Thyroid gland (tissue), 4 donors: ENCODE measurements at regions of chr2 and their contacts with region 1.

Region 1: DNA sequence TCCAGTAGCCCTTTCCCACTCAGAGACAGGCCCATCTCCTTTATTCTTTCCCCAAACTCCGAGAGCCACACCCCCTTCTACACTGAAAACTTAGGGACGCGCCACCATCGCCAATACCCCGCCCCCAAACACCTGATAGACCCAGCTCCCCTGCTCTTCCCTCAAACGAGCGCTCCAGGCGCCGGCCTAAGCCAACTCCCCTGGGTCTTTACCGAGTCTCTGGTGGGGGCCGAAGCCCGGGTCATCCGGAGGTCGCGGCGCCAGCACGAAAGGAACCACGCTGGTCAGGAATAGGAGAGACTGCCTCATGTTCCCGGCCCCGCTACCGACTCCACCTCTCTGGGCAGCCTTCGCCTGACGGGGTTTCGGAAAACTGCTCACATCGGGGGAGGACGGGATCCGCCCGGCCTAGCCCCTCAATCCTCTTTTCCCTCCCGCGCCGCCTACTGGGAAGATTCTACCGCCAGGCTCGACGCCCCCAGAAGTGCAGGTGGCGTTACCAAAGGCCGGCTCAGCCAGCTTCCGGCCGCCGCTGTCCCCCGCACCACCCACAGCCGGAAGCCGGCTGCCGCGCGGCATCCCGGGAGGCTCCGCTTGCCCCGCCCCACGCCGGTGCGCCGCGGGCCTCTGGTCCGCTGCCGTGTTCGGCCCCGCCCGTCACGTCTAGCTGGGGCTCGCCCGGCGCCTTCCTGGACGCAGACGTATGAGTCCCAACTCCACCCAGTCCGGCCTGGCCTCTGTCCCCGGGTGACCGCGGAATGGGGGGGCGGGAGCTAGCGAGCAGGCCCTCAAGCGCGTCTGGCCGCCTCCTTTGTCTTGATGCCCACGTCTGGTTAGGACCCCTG is at the start of gene ADAM17:
- DNase-seq: peak; percentile 97
- H3K4me3 ChIP-seq: peak within 1 kb of the TSS; percentile 56 to 92 (median 84)
- H3K27ac ChIP-seq: peak within 1 kb of the TSS; percentile 97 to 100 (median 99)
- H3K4me1 ChIP-seq: peaks cover 21 to 41% of the 10 kb centered on the region in 2 donors
- H3K27me3 ChIP-seq: no peaks in the 10 kb centered on the region
- CTCF ChIP-seq: peak in 4 of 6 experiments; percentile 23 to 82 (median 58)
- POLR2A ChIP-seq: peak; percentile 86 to 97
- total RNA-seq, gene ADAM17: 26.9 to 39.4 (median 31.3) TPM

Region 2: GRCh38 chr2:9261231-9261883 is 294.2 kb before region 1 on chr2:
- intact Hi-C with region 1: no loop called
- DNase-seq: no peak
- H3K4me3 ChIP-seq: no peak overlapping the region
- H3K27ac ChIP-seq: peak overlapping the region; percentile 36 to 81 (median 66)
- H3K4me1 ChIP-seq: peaks cover 72 to 83% of the 10 kb centered on the region in 2 donors
- H3K27me3 ChIP-seq: no peaks in the 10 kb centered on the region
- CTCF ChIP-seq: no peak
- POLR2A ChIP-seq: no peak

Region 3: DNA sequence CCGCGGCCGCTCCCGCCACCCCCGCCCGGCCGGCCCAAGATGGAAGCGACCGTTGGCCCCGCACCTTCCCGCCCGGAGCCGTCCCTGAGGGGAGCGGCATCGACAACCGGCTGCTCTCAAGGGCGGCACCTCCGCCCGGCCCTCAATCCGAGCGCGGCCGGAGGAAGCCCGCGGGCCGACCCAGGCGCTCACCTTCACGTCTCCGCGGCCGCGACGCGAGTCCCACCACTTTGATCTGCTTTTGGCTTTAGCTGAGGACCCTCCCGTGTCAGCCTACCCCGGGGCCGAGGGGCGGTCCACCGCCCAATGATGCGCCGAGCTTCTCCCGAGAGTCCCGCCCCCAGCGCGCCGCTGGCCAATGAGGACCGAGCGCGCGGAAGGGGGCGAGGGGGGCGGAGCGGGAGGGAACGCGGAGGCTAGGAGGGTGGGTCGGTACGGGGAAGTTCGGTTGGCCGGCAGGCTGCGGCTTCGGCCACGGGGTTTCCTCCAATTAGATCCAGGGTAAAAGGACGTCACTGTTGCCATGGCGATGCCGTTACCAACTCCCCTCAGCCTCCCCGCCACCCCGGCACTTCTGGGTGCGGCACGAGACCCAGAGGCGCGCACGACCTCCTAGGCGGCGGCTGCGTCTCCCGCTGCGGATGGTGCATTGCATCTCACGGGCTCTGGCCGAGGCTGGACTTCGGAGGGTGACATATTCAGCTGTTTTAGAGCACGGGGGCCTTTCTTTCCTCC is 75.4 kb after region 1 on chr2 and contains the start of gene YWHAQ:
- intact Hi-C with region 1: loop called (anchors 5 kb)
- DNase-seq: peak; percentile 99 to 100
- H3K4me3 ChIP-seq: peak within 1 kb of the TSS; percentile 74 to 87 (median 80)
- H3K27ac ChIP-seq: peak within 1 kb of the TSS; percentile 80 to 90 (median 83)
- H3K4me1 ChIP-seq: peaks cover 29 to 37% of the 10 kb centered on the region in 2 donors
- H3K27me3 ChIP-seq: no peaks in the 10 kb centered on the region
- CTCF ChIP-seq: peak in 1 of 6 experiments; percentile 6
- POLR2A ChIP-seq: peak; percentile 91 to 96
- total RNA-seq, gene YWHAQ: 246 to 270 (median 265) TPM

Region 4: DNA sequence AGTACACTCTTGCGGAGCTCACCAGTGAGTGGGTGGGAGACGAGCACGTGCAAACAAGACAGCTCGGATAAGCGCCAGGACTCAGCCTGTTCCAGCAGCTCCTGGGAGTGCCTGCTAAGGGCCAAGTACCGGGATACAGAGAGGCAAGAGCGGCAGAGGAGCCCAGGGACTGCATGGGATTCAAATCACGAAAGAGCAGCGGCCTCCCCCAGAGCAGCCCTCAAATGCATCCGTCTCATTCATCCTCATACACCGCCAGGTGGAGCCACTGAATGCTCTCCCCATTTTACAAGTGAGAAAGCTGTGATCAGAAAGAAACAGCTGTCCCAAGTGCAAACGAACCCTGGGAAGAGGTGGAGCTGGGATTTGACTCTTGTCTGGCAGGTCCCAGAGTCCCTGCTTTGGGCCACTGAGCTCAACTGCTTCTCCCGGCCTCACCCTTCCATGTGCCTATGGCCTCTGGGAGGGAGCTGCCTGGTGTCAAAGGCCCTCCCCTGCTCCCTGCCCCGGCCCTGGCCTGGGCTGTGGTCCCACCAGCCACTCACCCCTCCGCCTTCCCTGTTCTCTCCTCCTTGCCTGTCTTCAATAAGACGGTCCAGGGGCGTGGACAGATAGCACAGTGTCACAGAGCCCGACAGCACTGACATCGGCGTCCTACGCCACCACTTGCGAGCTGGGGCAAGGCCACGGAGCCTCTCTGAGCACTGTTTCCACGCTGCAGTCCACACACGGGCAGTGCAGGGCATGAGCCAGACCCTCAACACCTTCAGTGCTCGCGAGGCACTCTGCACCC is 215.0 kb after region 1 on chr2:
- intact Hi-C with region 1: no loop called
- DNase-seq: peak; percentile 59 to 67
- H3K4me3 ChIP-seq: no peak overlapping the region
- H3K27ac ChIP-seq: no peak overlapping the region
- H3K4me1 ChIP-seq: peaks cover 0 to 21% of the 10 kb centered on the region in 2 donors
- H3K27me3 ChIP-seq: no peaks in the 10 kb centered on the region
- CTCF ChIP-seq: peak in 4 of 6 experiments; percentile 29 to 60 (median 43)
- POLR2A ChIP-seq: no peak